CD8-positive, alpha-beta T cell (primary cell): ENCODE measurements at regions of chr16 and their contacts with region 1.

Region 1: DNA sequence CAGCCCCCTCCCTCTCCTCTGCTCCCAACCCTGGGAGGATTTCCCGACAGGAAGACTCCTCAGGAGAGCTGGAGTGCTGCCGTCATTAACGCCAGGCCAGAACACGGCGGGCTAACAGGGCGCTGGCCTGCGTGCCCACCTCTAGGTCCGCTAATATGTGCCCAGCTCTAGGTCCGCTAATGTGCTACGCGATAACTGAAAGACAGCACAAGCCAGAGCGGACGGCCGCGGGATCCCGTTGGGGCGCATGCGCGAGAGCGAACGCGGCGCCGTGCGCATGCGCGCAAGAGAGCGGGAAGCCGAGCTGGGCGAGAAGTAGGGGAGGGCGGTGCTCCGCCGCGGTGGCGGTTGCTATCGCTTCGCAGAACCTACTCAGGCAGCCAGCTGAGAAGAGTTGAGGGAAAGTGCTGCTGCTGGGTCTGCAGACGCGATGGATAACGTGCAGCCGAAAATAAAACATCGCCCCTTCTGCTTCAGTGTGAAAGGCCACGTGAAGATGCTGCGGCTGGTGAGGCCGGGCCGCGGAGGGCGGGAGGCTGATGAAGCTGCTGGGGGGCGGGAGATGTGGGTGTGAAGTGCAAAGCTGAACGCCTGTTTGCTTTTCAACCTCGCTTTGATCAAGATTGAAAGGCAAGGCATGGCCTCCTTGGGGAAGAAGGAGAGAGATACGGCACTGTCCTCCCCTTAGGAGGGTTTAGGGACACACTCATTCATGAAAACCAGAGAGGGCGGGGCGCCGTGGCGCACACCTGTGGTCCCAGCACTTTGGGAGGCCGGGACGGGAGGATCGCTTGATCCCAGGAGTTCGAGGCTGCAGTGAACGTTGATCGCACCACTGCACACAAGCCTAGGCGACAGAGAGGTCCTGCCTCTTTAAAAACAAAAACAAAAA is at the start of gene CKLF:
- DNase-seq: peak; percentile 83 to 96 (median 90)
- ATAC-seq: peak; percentile 66
- H3K4me3 ChIP-seq: peak within 1 kb of the TSS; percentile 88 to 95
- H3K4me3 Mint-ChIP-seq: peak within 1 kb of the TSS; percentile 94
- H3K27ac ChIP-seq: peak within 1 kb of the TSS; percentile 76 to 81
- H3K27ac Mint-ChIP-seq: peak within 1 kb of the TSS; percentile 91
- H3K4me1 ChIP-seq: peaks cover 66% of the 10 kb centered on the region
- H3K4me1 Mint-ChIP-seq: peaks cover 79% of the 10 kb centered on the region
- H3K27me3 ChIP-seq: no peaks in the 10 kb centered on the region
- H3K27me3 Mint-ChIP-seq: no peaks in the 10 kb centered on the region
- CTCF ChIP-seq: no peak
- total RNA-seq, gene CKLF: 7.9 to 11.1 TPM

Region 2: GRCh38 chr16:66474750-66475199 is 77.8 kb before region 1 on chr16:
- CTCF ChIA-PET with region 1: interaction called, 4 read pairs
- POLR2A ChIA-PET with region 1: no interaction called
- intact Hi-C with region 1: loop called (anchors 2 kb)
- DNase-seq: peak in 8 of 9 experiments; percentile 28 to 85 (median 62)
- ATAC-seq: peak; percentile 90
- H3K4me3 ChIP-seq: no peak overlapping the region
- H3K4me3 Mint-ChIP-seq: no peak overlapping the region
- H3K27ac ChIP-seq: peak overlapping the region in 1 of 2 experiments; percentile 6
- H3K27ac Mint-ChIP-seq: peak overlapping the region; percentile 81
- H3K4me1 ChIP-seq: peaks cover 24% of the 10 kb centered on the region
- H3K4me1 Mint-ChIP-seq: peaks cover 26% of the 10 kb centered on the region
- H3K27me3 ChIP-seq: no peaks in the 10 kb centered on the region
- H3K27me3 Mint-ChIP-seq: no peaks in the 10 kb centered on the region
- CTCF ChIP-seq: no peak

Region 3: GRCh38 chr16:66511615-66512500 is 40.7 kb before region 1 on chr16:
- CTCF ChIA-PET with region 1: interaction called, 11 read pairs
- POLR2A ChIA-PET with region 1: interaction called, 5 read pairs
- intact Hi-C with region 1: no loop called
- DNase-seq: peak in 2 of 9 experiments; percentile 27 to 33
- ATAC-seq: no peak
- H3K4me3 ChIP-seq: no peak overlapping the region
- H3K4me3 Mint-ChIP-seq: no peak overlapping the region
- H3K27ac ChIP-seq: no peak overlapping the region
- H3K27ac Mint-ChIP-seq: no peak overlapping the region
- H3K4me1 ChIP-seq: peaks cover 19% of the 10 kb centered on the region
- H3K4me1 Mint-ChIP-seq: peaks cover 27% of the 10 kb centered on the region
- H3K27me3 ChIP-seq: no peaks in the 10 kb centered on the region
- H3K27me3 Mint-ChIP-seq: no peaks in the 10 kb centered on the region
- CTCF ChIP-seq: no peak

Region 4: GRCh38 chr16:66588981-66589713 is 36.6 kb after region 1 on chr16:
- CTCF ChIA-PET with region 1: interaction called, 5 read pairs
- POLR2A ChIA-PET with region 1: interaction called, 4 read pairs
- intact Hi-C with region 1: loop called (anchors 1 to 5 kb)
- DNase-seq: peak; percentile 45 to 85 (median 70)
- ATAC-seq: peak; percentile 94
- H3K4me3 ChIP-seq: no peak overlapping the region
- H3K4me3 Mint-ChIP-seq: peak overlapping the region; percentile 83
- H3K27ac ChIP-seq: no peak overlapping the region
- H3K27ac Mint-ChIP-seq: peak overlapping the region; percentile 49
- H3K4me1 ChIP-seq: peaks cover 25% of the 10 kb centered on the region
- H3K4me1 Mint-ChIP-seq: peaks cover 24% of the 10 kb centered on the region
- H3K27me3 ChIP-seq: no peaks in the 10 kb centered on the region
- H3K27me3 Mint-ChIP-seq: no peaks in the 10 kb centered on the region
- CTCF ChIP-seq: peak; percentile 71

Region 5: DNA sequence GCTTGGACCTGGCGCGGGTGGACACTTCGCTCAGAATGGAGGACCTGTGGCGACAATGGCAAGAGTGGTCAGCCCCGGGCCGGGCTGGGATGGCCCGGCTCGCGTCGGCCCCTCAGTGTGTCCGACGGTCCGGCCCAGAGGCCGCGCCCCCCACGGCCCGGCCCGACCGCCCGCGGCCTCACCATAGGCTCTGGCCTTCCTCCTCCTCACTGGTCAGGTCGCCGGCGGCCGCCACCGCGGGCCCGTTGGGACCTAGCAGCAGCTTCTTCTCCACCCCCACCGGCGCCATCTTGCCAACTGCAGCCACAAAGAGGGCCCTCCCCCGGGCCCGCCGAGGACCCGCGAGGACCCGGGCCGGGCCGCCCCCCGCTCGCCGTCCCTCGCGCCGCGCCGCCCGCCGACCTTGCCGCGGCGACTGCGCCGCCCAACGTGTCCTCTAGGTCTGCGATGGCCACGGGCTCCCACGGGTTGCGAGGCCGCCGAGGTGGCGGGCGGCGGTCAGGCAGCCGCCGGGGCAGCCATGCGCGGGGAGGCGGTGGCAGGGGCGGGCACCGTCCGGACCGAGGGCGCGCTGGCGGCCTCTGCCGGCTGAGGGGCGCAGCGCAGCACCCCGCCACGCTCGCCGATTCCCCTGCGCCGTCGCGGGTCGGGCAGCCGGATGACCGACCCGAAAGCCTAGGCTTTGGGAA is 198.9 kb after region 1 on chr16 and contains the start of gene DYNC1LI2:
- CTCF ChIA-PET with region 1: no interaction called
- POLR2A ChIA-PET with region 1: no interaction called
- intact Hi-C with region 1: loop called in 1 of 2 experiments (anchors 5 kb)
- DNase-seq: peak; percentile 63 to 90 (median 78)
- ATAC-seq: peak; percentile 96
- H3K4me3 ChIP-seq: peak within 1 kb of the TSS; percentile 70 to 90
- H3K4me3 Mint-ChIP-seq: peak within 1 kb of the TSS; percentile 87
- H3K27ac ChIP-seq: peak within 1 kb of the TSS; percentile 67 to 79
- H3K27ac Mint-ChIP-seq: peak within 1 kb of the TSS; percentile 94
- H3K4me1 ChIP-seq: peaks cover 32% of the 10 kb centered on the region
- H3K4me1 Mint-ChIP-seq: peaks cover 43% of the 10 kb centered on the region
- H3K27me3 ChIP-seq: no peaks in the 10 kb centered on the region
- H3K27me3 Mint-ChIP-seq: peaks cover 11% of the 10 kb centered on the region
- CTCF ChIP-seq: peak; percentile 76
- total RNA-seq, gene DYNC1LI2: 102 to 114 TPM